A549 (cell line): ENCODE measurements at regions of chr12 and their contacts with region 1.

Region 1: GRCh38 chr12:6423267-6424007 is 21.3 kb upstream of the CD27 start:
- DNase-seq: peak; percentile 87 to 93
- ATAC-seq: peak; percentile 91 to 95
- H3K4me3 ChIP-seq: no peak overlapping the region
- H3K27ac ChIP-seq: peak overlapping the region; percentile 42 to 76; a peak in 4 of 6 replicates
- H3K4me1 ChIP-seq: peaks cover 26% of the 10 kb centered on the region
- CTCF ChIP-seq: peak; percentile 95
- EP300 ChIP-seq: no peak
- POLR2A ChIP-seq: no peak
- RAD21 ChIP-seq: peak; percentile 98

Region 2: GRCh38 chr12:6434205-6435140 is 11.0 kb after region 1 on chr12:
- CTCF ChIA-PET with region 1: interaction called, 17 read pairs
- POLR2A ChIA-PET with region 1: no interaction called
- DNase-seq: no peak
- ATAC-seq: no peak
- H3K4me3 ChIP-seq: no peak overlapping the region
- H3K27ac ChIP-seq: peak overlapping the region; percentile 2 to 52; a peak in 3 of 6 replicates
- H3K4me1 ChIP-seq: peaks cover 24% of the 10 kb centered on the region
- CTCF ChIP-seq: no peak
- EP300 ChIP-seq: no peak
- POLR2A ChIP-seq: no peak
- RAD21 ChIP-seq: no peak

Region 3: DNA sequence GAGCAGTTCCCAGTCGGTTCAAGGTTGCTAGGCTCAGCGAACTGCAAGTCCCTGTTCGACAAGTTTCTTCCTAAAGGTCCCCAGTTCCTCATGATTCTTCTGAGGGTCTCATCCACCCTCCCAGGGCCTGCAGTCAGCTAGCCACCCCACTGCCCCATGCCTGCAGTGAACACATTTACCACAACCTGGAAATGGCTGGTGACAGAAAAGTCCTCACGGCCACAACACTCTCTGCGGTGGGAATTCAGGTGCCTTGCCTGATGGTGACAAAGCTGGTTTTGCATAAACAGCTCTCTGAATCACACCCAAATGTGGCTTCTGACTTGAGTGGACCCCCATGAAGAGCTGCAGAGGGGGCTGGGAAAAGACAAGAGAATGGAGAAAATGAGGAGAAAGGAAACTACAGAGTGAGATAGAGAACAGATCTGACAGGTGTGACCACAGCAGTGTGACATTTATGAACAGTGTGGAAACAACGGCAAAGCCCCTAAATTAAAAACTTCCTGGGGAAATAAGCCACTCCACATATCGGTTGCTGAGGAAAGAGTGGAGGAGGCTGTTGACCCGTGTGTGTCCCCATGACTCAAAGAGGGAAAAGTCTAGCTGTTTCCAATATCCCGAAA is 20.0 kb after region 1 on chr12:
- CTCF ChIA-PET with region 1: interaction called, 30 read pairs
- POLR2A ChIA-PET with region 1: no interaction called
- DNase-seq: no peak
- ATAC-seq: no peak
- H3K4me3 ChIP-seq: no peak overlapping the region
- H3K27ac ChIP-seq: peak overlapping the region in 1 of 2 experiments; percentile 24; a peak in 1 of 6 replicates
- H3K4me1 ChIP-seq: no peaks in the 10 kb centered on the region
- CTCF ChIP-seq: no peak
- EP300 ChIP-seq: no peak
- POLR2A ChIP-seq: no peak
- RAD21 ChIP-seq: no peak

Region 4: DNA sequence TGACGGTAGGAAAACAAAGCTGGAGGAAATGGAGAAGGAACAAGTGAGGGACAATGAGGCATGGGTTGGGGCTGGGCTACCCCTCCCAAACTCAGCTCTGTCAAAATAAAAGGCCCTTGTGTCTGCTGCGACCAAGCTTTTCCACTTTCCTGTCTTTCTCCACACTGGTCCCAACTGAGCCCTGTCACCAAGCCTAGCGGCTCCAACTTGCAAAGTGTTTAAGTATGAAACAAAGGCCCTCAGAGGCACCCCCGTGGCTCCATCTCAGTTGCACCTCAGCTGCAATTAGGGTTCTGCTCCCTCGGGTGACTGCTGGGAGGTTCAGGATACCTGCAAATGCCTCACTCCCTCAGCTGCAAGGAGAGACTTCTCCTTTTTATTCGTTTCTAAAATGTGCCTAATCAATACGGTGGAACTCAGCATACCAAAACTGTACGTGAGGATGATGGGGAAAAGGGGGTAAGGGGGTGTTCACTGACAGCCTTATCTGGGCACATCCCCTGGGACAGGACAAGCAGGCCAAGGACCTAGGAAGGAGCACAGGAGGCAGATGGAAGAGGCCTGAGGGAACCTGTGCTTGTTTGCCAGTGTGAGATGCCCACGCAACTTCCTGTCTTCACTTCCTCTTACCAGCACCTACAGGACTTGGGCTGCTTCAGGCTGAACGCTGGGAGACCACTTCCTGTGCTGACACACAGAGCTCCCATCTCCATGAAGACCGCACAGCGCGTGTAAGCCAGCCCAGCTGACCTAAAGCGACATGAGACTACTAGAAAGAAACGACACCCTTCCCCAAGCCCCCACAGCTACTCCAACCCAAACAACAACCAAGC is 38.2 kb after region 1 on chr12:
- CTCF ChIA-PET with region 1: interaction called, 121 read pairs
- POLR2A ChIA-PET with region 1: interaction called, 3 read pairs
- DNase-seq: no peak
- ATAC-seq: no peak
- H3K4me3 ChIP-seq: no peak overlapping the region
- H3K27ac ChIP-seq: no peak overlapping the region
- H3K4me1 ChIP-seq: 0 out of 3 replicates have a peak, but pooled peaks cover 5% of the 10 kb centered on the region
- CTCF ChIP-seq: no peak
- EP300 ChIP-seq: no peak
- POLR2A ChIP-seq: no peak
- RAD21 ChIP-seq: no peak